Tibial artery (tissue), 4 donors: ENCODE measurements at regions of chr11 and their contacts with region 1.

Region 1: DNA sequence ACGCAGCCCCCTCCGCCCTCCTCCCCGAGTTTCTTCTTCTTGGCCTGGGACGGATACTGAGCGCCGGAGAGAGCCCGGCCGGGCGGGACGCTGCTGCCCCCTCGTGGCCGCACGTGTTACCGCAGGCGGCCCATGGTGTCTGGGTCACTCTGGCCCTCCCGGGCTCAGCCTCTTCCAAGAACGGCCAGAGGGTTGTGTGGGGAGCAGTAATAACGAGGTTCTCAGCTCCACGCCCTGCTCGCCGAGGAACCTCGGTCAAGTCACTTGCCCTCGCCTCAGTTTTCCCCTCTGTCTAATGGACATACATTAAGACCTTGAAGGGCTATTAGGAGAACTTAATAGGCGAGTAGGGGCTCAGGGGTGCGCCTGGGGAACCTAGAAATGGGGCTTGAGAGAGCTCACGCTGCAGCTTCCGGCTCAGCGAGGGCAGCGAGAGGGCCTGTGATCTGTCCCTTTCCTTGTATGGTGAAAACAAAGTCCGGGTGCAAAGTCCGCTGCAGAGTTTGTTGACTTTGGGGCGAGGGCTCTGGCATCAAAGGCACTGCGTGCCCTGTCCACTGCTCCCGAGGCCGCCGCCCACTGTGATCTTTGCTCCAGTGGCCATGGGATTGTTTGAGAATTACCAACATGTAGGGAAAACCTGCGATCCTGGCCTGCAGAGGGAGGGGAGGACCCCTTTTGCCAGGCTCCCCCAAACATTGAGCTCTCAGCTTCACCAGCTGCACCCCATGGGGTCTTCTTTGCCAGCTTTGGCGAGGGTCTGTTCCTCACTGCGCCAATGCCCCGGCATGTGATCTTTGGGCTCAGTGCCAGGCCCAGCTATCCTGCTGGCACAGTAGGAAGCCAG is 14.4 kb upstream of the LRP5 start:
- DNase-seq: peak; percentile 51 to 85
- H3K4me3 ChIP-seq: no peak overlapping the region
- H3K27ac ChIP-seq: no peak overlapping the region
- H3K4me1 ChIP-seq: peaks cover 0 to 18% (median 7%) of the 10 kb centered on the region in 4 donors
- H3K27me3 ChIP-seq: no peaks in the 10 kb centered on the region
- CTCF ChIP-seq: peak; percentile 96 to 100

Region 2: DNA sequence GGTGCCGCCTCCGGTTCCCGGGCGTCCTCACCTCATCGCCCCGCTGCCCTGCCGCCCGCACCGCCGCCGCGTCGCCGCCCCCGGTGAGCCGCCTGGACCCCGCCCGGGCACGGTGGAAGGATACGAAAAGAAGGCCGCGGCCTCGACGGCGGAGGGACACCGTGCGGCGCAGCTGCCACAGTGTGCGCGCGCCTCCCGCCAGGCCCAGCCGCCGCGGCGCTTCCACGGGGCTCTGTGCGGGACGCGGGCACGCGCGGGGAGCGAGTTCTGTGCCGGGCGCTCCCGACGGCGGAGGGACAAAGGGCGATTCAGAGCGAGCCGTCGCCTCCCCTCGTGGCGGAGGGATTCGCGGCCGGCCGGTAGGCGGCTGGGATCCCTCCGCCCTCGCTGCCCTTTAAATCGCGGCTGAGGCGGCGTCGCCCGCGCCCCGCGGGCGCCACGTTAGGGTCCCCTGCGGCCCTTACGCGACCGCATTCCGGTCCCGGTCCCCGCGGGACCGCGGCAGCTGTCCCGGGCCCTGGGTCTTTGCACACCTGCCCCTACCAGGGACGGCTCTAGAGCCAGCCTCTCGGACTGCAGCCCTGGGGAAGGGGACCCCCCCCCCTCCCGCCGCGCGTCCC is 84.4 kb before region 1 on chr11:
- intact Hi-C with region 1: loop called (anchors 10 kb)
- DNase-seq: peak; percentile 79 to 93
- H3K4me3 ChIP-seq: peak overlapping the region; percentile 67 to 95
- H3K27ac ChIP-seq: peak overlapping the region; percentile 97 to 98
- H3K4me1 ChIP-seq: peaks cover 0 to 50% (median 32%) of the 10 kb centered on the region in 4 donors
- H3K27me3 ChIP-seq: no peaks in the 10 kb centered on the region
- CTCF ChIP-seq: peak; percentile 8 to 16

Region 3: GRCh38 chr11:68257475-68258362 is 40.3 kb before region 1 on chr11:
- intact Hi-C with region 1: loop called (anchors 2 kb)
- DNase-seq: peak; percentile 95 to 97
- H3K4me3 ChIP-seq: peak overlapping the region; percentile 2 to 19
- H3K27ac ChIP-seq: peak overlapping the region in 1 of 2 donors; percentile 46
- H3K4me1 ChIP-seq: peaks cover 0 to 17% (median 6%) of the 10 kb centered on the region in 4 donors
- H3K27me3 ChIP-seq: no peaks in the 10 kb centered on the region
- CTCF ChIP-seq: peak; percentile 88 to 97

Region 4: GRCh38 chr11:68271781-68272608 is 26.0 kb before region 1 on chr11 and contains the start of gene C11orf24:
- intact Hi-C with region 1: no loop called
- DNase-seq: peak; percentile 90 to 97
- H3K4me3 ChIP-seq: peak within 1 kb of the TSS; percentile 73 to 82
- H3K27ac ChIP-seq: peak within 1 kb of the TSS; percentile 90 to 94
- H3K4me1 ChIP-seq: peaks cover 0 to 40% (median 17%) of the 10 kb centered on the region in 4 donors
- H3K27me3 ChIP-seq: no peaks in the 10 kb centered on the region
- CTCF ChIP-seq: peak in 1 of 2 experiments; percentile 17

Region 5: GRCh38 chr11:69055598-69056516 is 757.8 kb after region 1 on chr11:
- intact Hi-C with region 1: no loop called
- DNase-seq: peak; percentile 59 to 85
- H3K4me3 ChIP-seq: no peak overlapping the region
- H3K27ac ChIP-seq: peak overlapping the region in 1 of 2 donors; percentile 45
- H3K4me1 ChIP-seq: peaks cover 0 to 35% (median 27%) of the 10 kb centered on the region in 4 donors
- H3K27me3 ChIP-seq: no peaks in the 10 kb centered on the region
- CTCF ChIP-seq: no peak